Activated CD4-positive, alpha-beta T cell treated with anti-CD3 and anti-CD28 coated beads for 36 hours (primary cell): ENCODE measurements at regions of chr5 and their contacts with region 1.

Region 1: DNA sequence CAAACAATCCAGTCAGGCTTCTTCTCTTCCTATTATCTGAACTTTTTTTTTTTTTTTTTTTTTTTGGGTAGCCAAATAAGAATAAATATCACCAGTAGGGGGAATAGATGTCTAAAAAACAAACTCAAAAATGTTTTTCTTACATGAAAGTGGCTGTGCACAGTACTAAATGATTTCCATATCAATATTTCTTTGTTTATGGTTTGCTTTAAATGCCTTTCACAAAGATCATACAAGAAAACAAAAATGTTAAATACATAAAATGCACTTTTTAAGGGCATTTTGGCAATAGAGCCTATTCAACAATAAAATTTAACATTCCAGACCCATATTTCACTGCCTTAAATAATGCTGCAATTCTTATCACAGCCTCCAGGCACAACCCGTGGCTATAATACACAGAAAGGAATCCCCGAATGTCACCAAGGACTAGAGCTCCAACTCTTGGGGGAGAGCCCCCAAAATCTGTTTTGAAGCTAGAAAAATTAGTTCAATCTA is 91.1 kb upstream of the TBCA start:
- DNase-seq: no peak
- ATAC-seq: peak; percentile 60
- H3K4me3 Mint-ChIP-seq: no peak overlapping the region
- H3K27ac Mint-ChIP-seq: no peak overlapping the region
- H3K4me1 Mint-ChIP-seq: no peaks in the 10 kb centered on the region
- H3K27me3 Mint-ChIP-seq: peaks cover 2% of the 10 kb centered on the region

Region 2: DNA sequence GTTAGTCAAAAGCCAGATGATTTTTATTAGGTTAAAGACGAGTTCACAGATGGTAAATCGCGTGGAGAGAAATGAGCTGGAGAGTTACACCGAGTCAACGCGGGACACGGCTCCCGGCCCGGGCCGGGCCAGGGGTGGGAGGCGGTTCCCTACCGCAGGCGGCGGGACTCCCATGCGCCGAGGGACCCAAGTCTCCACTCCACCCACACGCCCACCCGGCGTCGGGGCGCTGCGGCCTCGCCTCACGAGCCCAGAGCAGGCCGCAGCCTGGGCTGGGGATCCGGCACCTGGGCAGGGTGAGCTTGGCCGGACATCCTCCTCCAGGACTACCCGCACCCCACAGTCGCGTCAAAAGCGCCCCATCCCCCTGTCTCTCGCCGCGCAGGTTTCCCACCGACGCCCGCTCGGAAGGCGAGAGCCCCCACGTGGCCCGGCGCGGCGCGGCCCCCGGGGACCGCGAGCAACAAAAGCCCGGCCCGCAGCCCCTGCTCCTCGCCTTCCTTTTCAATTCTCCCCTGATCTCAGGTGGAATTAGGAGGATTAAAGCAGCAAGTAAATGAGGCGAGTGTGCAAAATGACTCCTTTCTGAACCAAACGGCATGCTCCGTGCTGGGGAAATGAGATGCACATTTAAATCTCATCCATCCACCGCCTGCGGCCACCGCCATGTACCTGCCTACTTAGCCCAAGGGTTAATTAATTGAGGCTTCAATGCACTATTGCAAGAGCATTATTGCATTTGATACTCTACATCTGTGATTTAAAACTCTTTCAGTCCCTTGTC is 105.4 kb after region 1 on chr5:
- CTCF ChIA-PET with region 1: interaction called, 5 read pairs
- POLR2A ChIA-PET with region 1: interaction called, 11 read pairs
- intact Hi-C with region 1: loop called in 1 of 2 experiments (anchors 5 kb)
- DNase-seq: peak; percentile 55
- ATAC-seq: peak; percentile 65
- H3K4me3 Mint-ChIP-seq: peak overlapping the region; percentile 56
- H3K27ac Mint-ChIP-seq: no peak overlapping the region
- H3K4me1 Mint-ChIP-seq: peaks cover 12% of the 10 kb centered on the region
- H3K27me3 Mint-ChIP-seq: peaks cover 51% of the 10 kb centered on the region

Region 3: GRCh38 chr5:78269088-78269703 is 402.0 kb after region 1 on chr5:
- CTCF ChIA-PET with region 1: no interaction called
- POLR2A ChIA-PET with region 1: no interaction called
- intact Hi-C with region 1: loop called in 1 of 2 experiments (anchors 5 kb)
- DNase-seq: no peak
- ATAC-seq: no peak
- H3K4me3 Mint-ChIP-seq: no peak overlapping the region
- H3K27ac Mint-ChIP-seq: no peak overlapping the region
- H3K4me1 Mint-ChIP-seq: peaks cover 15% of the 10 kb centered on the region
- H3K27me3 Mint-ChIP-seq: no peaks in the 10 kb centered on the region